Endothelial cell of umbilical vein (primary cell): ENCODE measurements at regions of chr17 and their contacts with region 1.

Region 1: DNA sequence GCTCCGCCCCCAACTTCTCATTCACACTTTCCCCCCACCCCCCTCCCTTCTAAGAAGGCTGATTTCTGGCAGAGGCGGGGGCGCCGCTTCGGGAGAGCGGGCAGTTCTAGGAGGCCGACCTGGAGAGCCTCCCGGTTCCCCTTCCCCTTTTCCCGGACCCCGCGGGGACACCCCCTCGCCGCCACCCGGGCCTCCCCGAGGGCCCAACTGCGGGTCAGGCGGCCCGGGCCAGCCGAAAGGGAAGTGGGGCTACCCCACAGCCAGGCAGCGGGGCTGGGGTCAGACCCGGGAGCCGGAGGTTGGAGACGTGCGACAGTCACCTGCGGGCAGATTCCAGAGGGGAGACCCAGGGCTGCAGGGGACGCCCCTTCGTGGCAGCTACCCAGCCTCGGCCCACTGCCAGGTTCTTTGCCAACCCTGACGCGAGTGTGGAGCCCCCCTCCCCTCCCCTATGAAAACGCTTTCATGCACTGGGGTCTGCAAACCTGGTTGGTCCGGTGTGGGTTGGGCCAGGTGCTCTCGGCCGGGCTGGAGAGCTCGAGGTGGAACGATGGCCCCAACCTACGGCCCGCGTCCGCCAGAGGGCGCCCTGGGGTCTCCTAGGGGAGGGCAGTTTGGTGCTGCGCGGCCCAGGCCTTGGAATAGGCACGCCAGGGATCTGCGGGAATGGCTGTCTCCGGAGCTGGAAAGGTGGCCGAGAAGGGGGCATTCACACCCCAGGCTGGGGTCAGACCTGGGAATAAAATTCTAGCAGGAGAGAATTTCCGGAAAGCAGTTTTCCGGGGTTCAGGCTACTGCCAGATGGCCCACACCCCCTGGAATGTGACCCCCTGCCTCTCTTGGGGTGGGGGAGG is 721 bp upstream of the SOCS3 start:
- DNase-seq: peak; percentile 84
- H3K4me3 ChIP-seq: peak overlapping the region; percentile 28 to 46 (median 39)
- H3K27ac ChIP-seq: peak overlapping the region; percentile 54
- H3K4me1 ChIP-seq: peaks cover 36% of the 10 kb centered on the region
- H3K27me3 ChIP-seq: no peaks in the 10 kb centered on the region
- CTCF ChIP-seq: peak; percentile 90 to 98
- POLR2A ChIP-seq: no peak

Region 2: DNA sequence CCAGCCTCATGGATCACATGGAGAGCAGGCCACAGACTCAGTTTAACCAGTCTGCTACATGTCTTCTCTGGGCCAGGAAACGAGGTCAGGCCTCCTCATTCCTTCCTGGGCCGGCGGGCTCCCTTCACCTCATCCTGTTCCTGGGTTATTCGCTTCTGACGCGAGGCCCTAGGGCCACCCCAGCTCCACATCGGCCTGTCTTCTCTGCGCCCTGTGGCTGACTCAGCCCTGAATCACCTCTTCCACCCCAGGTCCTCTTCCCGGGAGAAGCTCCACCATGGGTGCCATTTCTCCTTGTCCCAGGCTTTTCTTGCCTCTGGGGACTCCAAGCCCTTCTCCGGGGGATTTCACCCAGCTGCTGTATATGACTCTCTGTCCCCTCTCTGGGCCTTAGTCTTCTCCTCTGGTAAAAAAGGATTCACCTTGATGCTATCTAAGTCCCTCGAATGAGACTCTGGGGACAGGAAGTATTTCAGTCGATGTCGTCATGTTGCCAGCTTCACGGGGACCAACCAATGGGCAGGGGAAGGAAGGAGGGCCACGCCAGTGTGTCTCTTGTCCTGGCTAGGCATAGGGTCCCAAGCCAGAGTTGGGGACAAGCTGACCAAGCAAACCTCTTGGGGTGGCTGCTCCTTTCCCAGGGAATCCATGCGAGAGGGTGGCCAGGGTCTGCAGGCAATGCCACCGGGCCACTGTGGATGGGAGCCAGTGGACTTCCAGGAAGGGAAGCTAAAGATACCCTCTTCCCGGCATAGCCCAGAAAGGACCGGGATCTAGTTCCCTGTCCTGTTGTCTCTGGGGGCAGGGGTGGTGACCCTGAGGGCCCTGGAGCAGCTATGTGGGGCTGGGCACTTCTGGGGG is 59.4 kb before region 1 on chr17:
- CTCF ChIA-PET with region 1: interaction called, 11 read pairs
- POLR2A ChIA-PET with region 1: interaction called, 4 read pairs
- dilution Hi-C with region 1: no loop called
- intact Hi-C with region 1: no loop called
- DNase-seq: no peak
- H3K4me3 ChIP-seq: no peak overlapping the region
- H3K27ac ChIP-seq: no peak overlapping the region
- H3K4me1 ChIP-seq: no peaks in the 10 kb centered on the region
- H3K27me3 ChIP-seq: no peaks in the 10 kb centered on the region
- CTCF ChIP-seq: no peak
- POLR2A ChIP-seq: no peak

Region 3: DNA sequence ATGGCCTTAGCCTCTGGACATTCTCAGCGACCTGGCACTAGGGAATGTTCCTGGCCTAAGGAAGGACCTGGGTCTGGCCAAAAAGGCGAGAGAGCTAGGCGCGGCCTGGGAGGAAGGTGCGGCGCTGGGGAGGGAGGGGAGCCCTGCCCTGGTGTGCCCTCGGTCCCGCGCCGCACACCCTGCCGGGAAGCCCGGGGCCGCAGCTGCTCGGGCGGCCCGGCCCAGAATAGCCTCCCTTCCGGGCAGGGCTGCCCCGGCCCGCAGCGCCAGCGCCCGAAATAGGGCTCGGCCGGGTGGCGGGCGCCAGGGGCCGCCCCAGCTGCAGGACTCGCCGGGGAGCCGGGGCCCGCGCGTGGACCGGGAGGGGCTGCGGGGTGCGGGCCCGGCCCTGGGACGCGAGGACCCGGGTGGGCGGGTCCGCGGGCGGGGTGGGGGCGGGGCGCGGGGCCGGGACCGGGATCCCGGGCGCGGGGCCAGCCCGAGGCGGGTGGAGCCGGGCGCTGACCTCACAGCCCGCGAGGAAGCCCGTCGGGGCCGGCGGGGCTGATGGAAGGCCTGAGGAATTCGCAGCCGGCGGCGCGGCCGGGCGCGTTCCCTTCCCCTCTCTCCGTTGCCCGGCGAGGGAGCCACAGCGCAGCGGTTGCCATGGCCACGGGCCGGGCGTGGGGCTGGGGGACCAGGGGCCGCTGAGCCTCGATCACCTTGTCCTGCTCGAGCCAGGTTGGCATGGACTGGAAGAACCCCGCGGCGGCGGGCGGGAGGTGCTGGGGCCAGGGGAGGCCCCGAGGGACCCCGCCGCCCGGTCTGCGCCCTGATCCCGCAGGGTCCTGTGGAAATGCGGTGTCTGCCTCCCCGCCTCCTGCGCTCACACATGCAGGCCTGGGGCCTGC is 18.8 kb before region 1 on chr17:
- CTCF ChIA-PET with region 1: interaction called, 27 read pairs
- POLR2A ChIA-PET with region 1: interaction called, 12 read pairs
- dilution Hi-C with region 1: no loop called
- intact Hi-C with region 1: loop called (anchors 1 kb)
- DNase-seq: peak; percentile 43
- H3K4me3 ChIP-seq: peak overlapping the region in 2 of 3 experiments; percentile 17 to 26
- H3K27ac ChIP-seq: peak overlapping the region; percentile 82
- H3K4me1 ChIP-seq: peaks cover 36% of the 10 kb centered on the region
- H3K27me3 ChIP-seq: no peaks in the 10 kb centered on the region
- CTCF ChIP-seq: no peak
- POLR2A ChIP-seq: peak; percentile 27

Region 4: DNA sequence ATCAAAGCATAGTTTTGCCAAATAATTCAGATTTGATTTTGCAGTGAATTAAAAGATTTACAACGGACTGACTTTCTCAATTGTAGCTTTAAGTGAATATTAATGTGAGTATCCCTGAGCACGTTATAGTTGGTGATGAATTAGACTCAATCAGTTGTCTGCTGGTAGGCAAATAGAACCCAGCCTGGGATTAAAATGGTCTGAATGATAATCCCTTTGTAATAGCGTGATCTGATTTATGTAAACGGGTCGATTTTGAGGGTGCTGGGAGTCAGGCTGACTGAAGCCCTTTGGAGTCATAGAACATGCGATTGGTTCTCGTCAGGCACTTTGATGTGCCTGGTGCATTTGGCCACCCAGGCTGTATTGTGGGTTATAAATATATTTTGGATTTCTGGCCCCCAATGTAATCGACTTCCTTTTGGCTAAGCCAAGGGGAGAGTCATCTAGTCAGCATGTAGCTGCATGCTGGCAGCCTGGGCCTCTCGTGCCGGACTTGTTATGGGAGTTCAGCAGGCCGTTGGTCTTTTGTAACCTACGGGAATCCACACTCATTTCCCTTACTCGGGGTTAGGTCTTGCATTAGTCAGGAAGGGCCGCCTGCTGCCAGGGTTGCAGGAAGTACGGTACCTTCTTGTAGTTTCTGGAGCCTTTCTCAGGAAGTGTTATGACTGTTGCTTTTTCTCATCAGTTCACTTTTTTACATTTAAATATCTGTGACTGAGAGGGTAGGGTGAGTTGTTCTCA is 23.3 kb after region 1 on chr17:
- CTCF ChIA-PET with region 1: interaction called, 23 read pairs
- POLR2A ChIA-PET with region 1: interaction called, 3 read pairs
- dilution Hi-C with region 1: no loop called
- intact Hi-C with region 1: loop called (anchors 1 kb)
- DNase-seq: peak; percentile 99
- H3K4me3 ChIP-seq: peak overlapping the region in 1 of 3 experiments; percentile 6
- H3K27ac ChIP-seq: peak overlapping the region; percentile 94
- H3K4me1 ChIP-seq: peaks cover 80% of the 10 kb centered on the region
- H3K27me3 ChIP-seq: no peaks in the 10 kb centered on the region
- CTCF ChIP-seq: no peak
- POLR2A ChIP-seq: peak; percentile 46

Region 5: DNA sequence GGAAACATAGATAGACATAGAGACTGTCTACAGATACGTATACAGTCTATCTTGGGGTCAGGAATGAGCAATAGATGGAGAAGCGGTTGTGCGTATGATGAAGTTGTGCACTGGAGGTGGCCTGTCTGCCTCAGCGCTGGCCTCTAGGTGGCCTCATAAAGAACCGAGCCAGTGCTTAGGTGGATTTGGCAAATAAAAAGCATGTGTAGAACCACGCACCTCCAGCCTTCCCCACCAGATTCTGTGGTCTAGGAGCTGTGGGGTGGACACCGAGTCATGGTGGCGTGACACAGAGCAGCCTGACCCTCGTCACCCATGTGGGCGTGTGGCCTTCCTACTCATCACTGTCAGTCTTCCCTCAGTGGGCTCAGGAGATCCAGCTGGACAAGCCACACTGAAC is 51.8 kb after region 1 on chr17:
- CTCF ChIA-PET with region 1: interaction called, 65 read pairs
- POLR2A ChIA-PET with region 1: interaction called, 11 read pairs
- dilution Hi-C with region 1: no loop called
- intact Hi-C with region 1: no loop called
- DNase-seq: no peak
- H3K4me3 ChIP-seq: no peak overlapping the region
- H3K27ac ChIP-seq: no peak overlapping the region
- H3K4me1 ChIP-seq: peaks cover 36% of the 10 kb centered on the region
- H3K27me3 ChIP-seq: no peaks in the 10 kb centered on the region
- CTCF ChIP-seq: peak; percentile 28 to 43
- POLR2A ChIP-seq: no peak